K562 (cell line): ENCODE measurements at regions of chr5 and their contacts with region 1.

Region 1: GRCh38 chr5:154445422-154446182 is at the start of gene SAP30L:
- DNase-seq: peak; percentile 95 to 100 (median 100)
- ATAC-seq: peak; percentile 97
- H3K4me3 ChIP-seq: peak within 1 kb of the TSS; percentile 60
- H3K27ac ChIP-seq: peak within 1 kb of the TSS; percentile 68
- H3K4me1 ChIP-seq: peaks cover 8 to 19% of the 10 kb centered on the region in 2 experiments; a peak in 4 of 5 replicates
- H3K27me3 ChIP-seq: no peaks in the 10 kb centered on the region
- CTCF ChIP-seq: no peak
- EP300 ChIP-seq: no peak
- POLR2A ChIP-seq: peak; percentile 82
- RAD21 ChIP-seq: no peak
- polyA plus RNA-seq, gene SAP30L: 5.1 to 6.8 TPM

Region 2: GRCh38 chr5:153981905-153982605 is 463.5 kb before region 1 on chr5:
- CTCF ChIA-PET with region 1: no interaction called
- POLR2A ChIA-PET with region 1: no interaction called
- in situ Hi-C with region 1: no loop called
- intact Hi-C with region 1: no loop called
- DNase-seq: no peak
- ATAC-seq: no peak
- H3K4me3 ChIP-seq: no peak overlapping the region
- H3K27ac ChIP-seq: no peak overlapping the region
- H3K4me1 ChIP-seq: peaks cover 0 to 23% of the 10 kb centered on the region in 2 experiments; a peak in 3 of 5 replicates
- H3K27me3 ChIP-seq: no peaks in the 10 kb centered on the region; a peak in 1 of 5 replicates
- CTCF ChIP-seq: no peak
- EP300 ChIP-seq: no peak
- POLR2A ChIP-seq: no peak
- RAD21 ChIP-seq: no peak

Region 3: GRCh38 chr5:154196955-154197652 is 248.5 kb before region 1 on chr5:
- CTCF ChIA-PET with region 1: no interaction called
- POLR2A ChIA-PET with region 1: no interaction called
- in situ Hi-C with region 1: no loop called
- intact Hi-C with region 1: loop called (anchors 5 kb)
- DNase-seq: peak; percentile 70 to 87 (median 78)
- ATAC-seq: peak; percentile 82
- H3K4me3 ChIP-seq: peak overlapping the region; percentile 32
- H3K27ac ChIP-seq: peak overlapping the region; percentile 77
- H3K4me1 ChIP-seq: peaks cover 34 to 74% of the 10 kb centered on the region in 2 experiments
- H3K27me3 ChIP-seq: no peaks in the 10 kb centered on the region
- CTCF ChIP-seq: peak in 2 of 3 experiments; percentile 46 to 65; a peak in 4 of 6 replicates
- EP300 ChIP-seq: peak; percentile 87
- POLR2A ChIP-seq: peak; percentile 50
- RAD21 ChIP-seq: peak; percentile 53

Region 4: DNA sequence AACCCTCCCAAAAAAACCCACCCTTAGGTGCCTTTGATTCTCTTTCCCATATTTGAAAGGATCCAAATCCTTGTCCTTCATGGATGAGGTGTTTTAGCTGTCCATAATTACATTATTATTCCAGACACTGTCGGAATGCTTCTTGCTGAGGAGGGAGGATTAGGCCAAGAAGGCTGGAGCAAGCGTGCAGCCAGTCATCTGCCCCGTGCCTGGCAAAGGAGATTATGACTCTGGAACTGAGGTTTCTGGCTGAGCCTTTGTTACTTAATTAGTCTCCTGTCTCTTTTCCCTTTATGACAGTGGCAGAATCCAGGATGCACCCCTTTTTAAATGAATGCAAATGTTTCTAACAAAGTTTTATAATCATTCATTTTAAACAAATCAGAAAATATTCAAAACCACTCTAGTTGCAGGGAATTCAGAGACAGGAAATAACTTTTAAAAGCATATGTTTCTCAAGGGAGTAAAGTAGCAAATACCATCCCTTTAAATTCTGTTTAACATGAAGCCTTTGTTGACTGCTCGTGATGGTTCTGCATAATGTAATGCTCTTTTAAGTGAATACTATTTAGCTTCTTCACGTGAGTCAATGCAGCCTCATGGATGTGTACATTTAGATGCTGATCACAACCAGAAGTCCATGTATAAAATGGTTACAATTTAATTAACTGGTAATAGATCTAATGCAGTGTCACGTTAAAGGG is 185.2 kb before region 1 on chr5:
- CTCF ChIA-PET with region 1: no interaction called
- POLR2A ChIA-PET with region 1: no interaction called
- in situ Hi-C with region 1: no loop called
- intact Hi-C with region 1: no loop called
- DNase-seq: no peak
- ATAC-seq: no peak
- H3K4me3 ChIP-seq: no peak overlapping the region
- H3K27ac ChIP-seq: no peak overlapping the region
- H3K4me1 ChIP-seq: no peaks in the 10 kb centered on the region
- H3K27me3 ChIP-seq: no peaks in the 10 kb centered on the region
- CTCF ChIP-seq: no peak
- EP300 ChIP-seq: no peak
- POLR2A ChIP-seq: no peak
- RAD21 ChIP-seq: no peak

Region 5: GRCh38 chr5:154461531-154461930 is 15.9 kb after region 1 on chr5:
- CTCF ChIA-PET with region 1: no interaction called
- POLR2A ChIA-PET with region 1: interaction called, 10 read pairs
- in situ Hi-C with region 1: no loop called
- intact Hi-C with region 1: no loop called
- DNase-seq: no peak
- ATAC-seq: no peak; the same call in 1 of the 3 replicates
- H3K4me3 ChIP-seq: no peak overlapping the region
- H3K27ac ChIP-seq: no peak overlapping the region
- H3K4me1 ChIP-seq: no peaks in the 10 kb centered on the region
- H3K27me3 ChIP-seq: peaks cover 2 to 10% of the 10 kb centered on the region in 2 experiments; a peak in 4 of 5 replicates
- CTCF ChIP-seq: peak; percentile 12 to 46 (median 18); a peak in 2 of 6 replicates
- EP300 ChIP-seq: no peak
- POLR2A ChIP-seq: no peak
- RAD21 ChIP-seq: peak in 1 of 2 experiments; percentile 31; a peak in 2 of 4 replicates